PC-3 (cell line): ENCODE measurements at regions of chr14 and their contacts with region 1.

Region 1: GRCh38 chr14:61585598-61586543 is 109.4 kb upstream of the HIF1A start:
- DNase-seq: peak; percentile 79
- ATAC-seq: peak; percentile 62
- H3K4me3 ChIP-seq: peak overlapping the region; percentile 9; the same call in 1 of the 2 replicates
- H3K27ac ChIP-seq: peak overlapping the region; percentile 93
- H3K4me1 ChIP-seq: peaks cover 34% of the 10 kb centered on the region
- H3K27me3 ChIP-seq: no peaks in the 10 kb centered on the region
- CTCF ChIP-seq: no peak

Region 2: GRCh38 chr14:61620130-61620946 is 34.5 kb after region 1 on chr14:
- CTCF ChIA-PET with region 1: interaction called, 3 read pairs
- POLR2A ChIA-PET with region 1: interaction called, 6 read pairs
- intact Hi-C with region 1: loop called (anchors 1 kb)
- DNase-seq: peak; percentile 56
- ATAC-seq: peak; percentile 85
- H3K4me3 ChIP-seq: no peak overlapping the region
- H3K27ac ChIP-seq: peak overlapping the region; percentile 50
- H3K4me1 ChIP-seq: peaks cover 51% of the 10 kb centered on the region
- H3K27me3 ChIP-seq: no peaks in the 10 kb centered on the region
- CTCF ChIP-seq: no peak

Region 3: GRCh38 chr14:61638595-61639387 is 52.9 kb after region 1 on chr14:
- CTCF ChIA-PET with region 1: no interaction called
- POLR2A ChIA-PET with region 1: no interaction called
- intact Hi-C with region 1: loop called (anchors 1 kb)
- DNase-seq: peak; percentile 92
- ATAC-seq: peak; percentile 90
- H3K4me3 ChIP-seq: 0 out of 2 replicates have a peak overlapping the region, but pooled peaks have one; percentile 3
- H3K27ac ChIP-seq: peak overlapping the region; percentile 75
- H3K4me1 ChIP-seq: peaks cover 36% of the 10 kb centered on the region
- H3K27me3 ChIP-seq: no peaks in the 10 kb centered on the region
- CTCF ChIP-seq: no peak

Region 4: GRCh38 chr14:61768240-61768639 is 182.4 kb after region 1 on chr14:
- CTCF ChIA-PET with region 1: no interaction called
- POLR2A ChIA-PET with region 1: no interaction called
- intact Hi-C with region 1: no loop called
- DNase-seq: no peak
- ATAC-seq: no peak
- H3K4me3 ChIP-seq: no peak overlapping the region
- H3K27ac ChIP-seq: no peak overlapping the region
- H3K4me1 ChIP-seq: peaks cover 25% of the 10 kb centered on the region
- H3K27me3 ChIP-seq: no peaks in the 10 kb centered on the region
- CTCF ChIP-seq: no peak